ENCODE measurements at regions of chr20 and their contacts with region 1.

Region 1: DNA sequence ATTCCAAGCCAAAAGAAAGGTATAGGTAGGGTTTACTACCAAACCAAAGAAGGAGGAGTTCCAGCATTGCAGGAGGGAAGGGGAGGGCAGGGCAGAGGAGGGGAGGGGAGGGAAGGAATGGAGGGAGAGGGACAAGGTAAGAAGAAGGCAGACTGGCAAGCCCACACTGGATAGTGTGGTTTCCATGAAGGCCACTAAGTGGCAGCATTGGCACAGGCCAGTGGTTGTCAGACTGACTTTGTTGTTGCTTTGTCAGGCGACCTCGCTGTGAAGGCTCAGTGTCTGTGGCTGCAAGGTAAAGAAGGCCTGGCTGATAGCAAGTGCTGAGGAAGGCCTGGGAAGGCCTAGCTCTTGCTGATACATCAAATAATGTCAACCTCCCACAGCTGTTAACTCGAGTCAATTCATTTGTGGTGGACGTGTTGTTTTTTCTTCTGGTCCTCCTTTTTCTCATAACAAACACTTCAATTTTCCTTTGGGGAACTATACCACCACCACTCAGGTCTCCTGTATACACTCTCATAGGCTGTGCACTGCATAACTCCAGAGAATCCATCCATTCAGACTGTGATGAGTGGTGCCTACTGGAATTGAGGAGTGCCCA is 7.7 kb upstream of the ZNF334 start:
- DNase-seq: peak; percentile 52 to 58
- H3K4me3 ChIP-seq: no peak overlapping the region
- H3K27ac ChIP-seq: no peak overlapping the region
- H3K4me1 ChIP-seq: no peaks in the 10 kb centered on the region
- H3K27me3 ChIP-seq: peaks cover 27% of the 10 kb centered on the region; the same call in 1 of the 2 replicates
- CTCF ChIP-seq: peak; percentile 74

Region 2: DNA sequence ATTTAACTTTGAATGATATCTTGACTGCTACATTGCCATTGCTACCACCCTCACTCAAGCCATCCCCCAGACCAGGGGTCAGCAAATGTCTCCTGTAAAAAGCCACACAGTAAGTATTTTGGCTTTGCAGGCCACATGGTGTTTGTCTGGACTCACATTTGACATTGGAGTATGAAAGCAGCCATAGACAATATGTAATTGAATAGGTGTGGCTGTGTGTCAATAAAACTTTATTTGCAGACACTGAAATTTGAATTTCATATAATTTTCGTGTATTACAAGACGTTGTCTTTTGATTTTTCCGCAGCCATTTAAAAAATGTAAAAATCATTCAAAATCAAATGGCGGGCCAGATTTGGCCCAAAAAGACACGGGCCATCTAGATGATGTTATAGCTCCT is 65.6 kb after region 1 on chr20:
- CTCF ChIA-PET with region 1: no interaction called
- POLR2A ChIA-PET with region 1: no interaction called
- intact Hi-C with region 1: no loop called
- DNase-seq: no peak
- H3K4me3 ChIP-seq: no peak overlapping the region
- H3K27ac ChIP-seq: no peak overlapping the region
- H3K4me1 ChIP-seq: no peaks in the 10 kb centered on the region
- H3K27me3 ChIP-seq: no peaks in the 10 kb centered on the region
- CTCF ChIP-seq: no peak

Region 3: GRCh38 chr20:46681032-46681854 is 160.2 kb after region 1 on chr20:
- CTCF ChIA-PET with region 1: no interaction called
- POLR2A ChIA-PET with region 1: no interaction called
- intact Hi-C with region 1: loop called (anchors 1 kb)
- DNase-seq: peak; percentile 53 to 62
- H3K4me3 ChIP-seq: no peak overlapping the region
- H3K27ac ChIP-seq: no peak overlapping the region
- H3K4me1 ChIP-seq: no peaks in the 10 kb centered on the region
- H3K27me3 ChIP-seq: no peaks in the 10 kb centered on the region
- CTCF ChIP-seq: peak; percentile 91

Region 4: DNA sequence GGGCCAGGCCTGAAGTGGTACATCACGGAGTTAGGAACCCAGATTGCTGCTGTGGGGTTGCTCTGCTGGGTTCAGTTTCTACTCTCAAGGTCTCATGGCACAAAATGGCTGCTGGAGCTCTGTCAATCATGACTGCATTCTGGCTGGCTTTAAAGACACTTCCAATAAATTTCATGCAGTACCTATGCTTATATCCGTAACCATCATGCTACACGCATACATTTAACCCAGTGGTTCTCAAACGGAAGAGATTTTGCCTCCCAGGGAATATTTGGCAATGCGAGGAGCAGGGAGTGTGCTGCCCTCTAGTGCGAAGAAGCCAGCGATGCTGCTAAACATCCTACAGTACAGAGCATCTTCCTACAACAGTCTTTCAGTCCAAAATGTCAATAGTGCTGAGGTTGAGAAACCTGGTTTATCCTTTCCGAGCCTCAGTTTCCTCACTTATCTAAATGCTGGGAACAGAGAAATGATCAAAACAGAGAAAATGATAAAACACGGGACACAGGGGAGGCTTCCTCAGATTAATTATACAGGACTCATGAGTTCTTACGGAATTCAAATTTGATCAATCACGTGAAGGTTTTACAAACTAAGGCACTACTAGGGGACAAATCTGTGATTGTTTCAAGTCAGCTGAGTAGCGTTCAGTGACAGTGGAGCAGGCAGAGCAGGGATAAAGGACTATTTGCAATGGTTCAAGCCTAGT is 178.7 kb after region 1 on chr20:
- CTCF ChIA-PET with region 1: no interaction called
- POLR2A ChIA-PET with region 1: no interaction called
- intact Hi-C with region 1: loop called (anchors 1 kb)
- DNase-seq: peak; percentile 29 to 37
- H3K4me3 ChIP-seq: no peak overlapping the region
- H3K27ac ChIP-seq: no peak overlapping the region
- H3K4me1 ChIP-seq: peaks cover 12% of the 10 kb centered on the region
- H3K27me3 ChIP-seq: no peaks in the 10 kb centered on the region
- CTCF ChIP-seq: peak; percentile 85

Region 5: DNA sequence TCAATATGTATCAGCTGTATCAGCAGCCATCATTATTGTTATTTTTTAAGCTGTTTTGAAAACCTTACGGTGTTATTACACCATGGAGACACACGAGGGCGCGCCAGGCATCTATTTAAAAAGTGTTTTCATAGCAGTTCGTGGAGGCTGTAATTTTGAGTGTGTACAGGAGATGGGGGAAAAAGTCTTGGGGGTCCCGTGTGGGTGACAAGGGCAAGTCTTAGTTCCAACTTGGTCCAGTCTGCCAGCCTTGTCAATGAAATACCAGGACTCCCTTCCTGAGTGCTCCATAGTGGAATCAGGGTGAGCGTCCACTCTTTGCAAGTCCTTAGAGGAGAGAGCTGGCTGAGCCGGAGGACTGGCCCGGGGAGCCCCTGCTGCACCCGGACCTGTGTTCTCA is 231.7 kb after region 1 on chr20:
- CTCF ChIA-PET with region 1: no interaction called
- POLR2A ChIA-PET with region 1: no interaction called
- intact Hi-C with region 1: loop called (anchors 1 kb)
- DNase-seq: peak in 1 of 2 experiments; percentile 65
- H3K4me3 ChIP-seq: no peak overlapping the region
- H3K27ac ChIP-seq: no peak overlapping the region
- H3K4me1 ChIP-seq: peaks cover under 1% of the 10 kb centered on the region
- H3K27me3 ChIP-seq: no peaks in the 10 kb centered on the region
- CTCF ChIP-seq: peak; percentile 95